Activated B cell treated with CpG ODN at 0.5 μM for 24 hours (primary cell): ENCODE measurements at regions of chr1 and their contacts with region 1.

Region 1: GRCh38 chr1:28409090-28409489 is 39.5 kb downstream of the PHACTR4 start:
- DNase-seq: no peak
- ATAC-seq: no peak
- H3K4me3 Mint-ChIP-seq: no peak overlapping the region
- H3K27ac Mint-ChIP-seq: no peak overlapping the region
- H3K4me1 Mint-ChIP-seq: peaks cover 7% of the 10 kb centered on the region
- H3K27me3 Mint-ChIP-seq: no peaks in the 10 kb centered on the region
- CTCF ChIP-seq: no peak

Region 2: DNA sequence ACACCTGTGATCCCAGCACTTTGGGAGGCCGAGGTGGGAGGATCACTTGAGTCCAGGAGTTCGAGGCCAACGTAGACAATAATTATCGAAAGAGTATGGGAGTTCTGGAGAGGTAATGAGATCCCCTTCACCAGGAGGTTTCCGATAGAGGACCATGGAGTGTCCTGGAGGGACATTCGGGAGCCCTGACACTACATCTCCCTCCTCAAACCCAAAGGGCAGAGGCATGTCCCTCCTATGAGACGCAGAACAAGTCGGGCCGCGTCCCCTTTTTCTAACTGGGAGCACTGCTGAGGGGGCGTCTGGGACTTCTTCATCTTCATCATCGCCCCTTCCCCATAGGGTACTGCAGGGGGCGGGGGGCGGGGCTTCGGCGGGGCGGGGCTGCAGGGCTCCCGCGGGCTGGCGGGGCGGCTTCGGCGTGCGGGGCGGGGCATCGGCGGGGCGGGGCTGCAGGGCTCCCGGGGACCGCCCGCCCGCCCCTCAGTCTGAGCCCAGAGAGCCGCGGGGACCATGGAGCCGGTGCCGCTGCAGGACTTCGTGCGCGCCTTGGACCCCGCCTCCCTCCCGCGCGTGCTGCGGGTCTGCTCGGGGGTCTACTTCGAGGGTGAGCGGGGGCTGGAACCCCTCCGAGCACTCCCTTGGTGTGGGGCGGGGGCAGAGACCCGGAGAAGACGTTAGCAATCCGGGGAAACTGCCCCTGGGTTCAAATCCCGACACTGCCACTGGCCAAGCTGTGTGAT is 536.9 kb before region 1 on chr1 and contains the start of gene THEMIS2:
- CTCF ChIA-PET with region 1: no interaction called
- POLR2A ChIA-PET with region 1: no interaction called
- intact Hi-C with region 1: no loop called
- DNase-seq: peak; percentile 73
- ATAC-seq: peak; percentile 71
- H3K4me3 Mint-ChIP-seq: peak within 1 kb of the TSS; percentile 97
- H3K27ac Mint-ChIP-seq: peak within 1 kb of the TSS; percentile 80
- H3K4me1 Mint-ChIP-seq: peaks cover 60% of the 10 kb centered on the region
- H3K27me3 Mint-ChIP-seq: no peaks in the 10 kb centered on the region
- CTCF ChIP-seq: no peak
- total RNA-seq, gene THEMIS2: 56.1 and 78.6 TPM in 2 replicates

Region 3: DNA sequence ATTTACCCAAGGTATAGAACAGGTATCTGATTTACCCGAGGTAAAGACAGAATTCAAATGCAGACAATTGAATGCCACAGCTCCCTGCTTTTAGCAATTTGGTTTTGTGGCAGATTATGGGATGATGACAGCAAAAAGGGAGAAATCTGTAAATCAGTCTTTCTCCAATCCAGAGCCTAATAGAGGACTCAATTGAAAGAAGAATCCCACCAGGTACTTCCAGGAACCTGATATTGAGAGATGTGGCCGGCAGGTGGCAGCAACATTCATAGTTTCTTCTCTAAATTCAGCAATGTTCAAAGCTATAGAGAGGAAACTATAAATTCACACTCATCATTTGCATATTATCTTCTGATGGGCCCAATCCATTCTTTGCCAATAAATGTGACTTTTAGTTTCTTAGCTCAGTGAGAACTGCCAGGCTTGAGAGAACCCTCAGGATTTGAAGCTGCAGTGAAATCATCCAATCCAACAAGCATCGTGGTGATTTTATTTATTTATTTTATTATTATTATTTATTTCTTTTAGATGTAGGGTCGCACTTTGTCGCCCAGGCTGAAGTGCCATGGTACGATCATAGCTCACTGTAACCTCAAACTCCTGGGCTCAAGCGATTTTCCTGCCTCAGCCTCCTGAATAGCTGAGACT is 49.4 kb before region 1 on chr1:
- CTCF ChIA-PET with region 1: interaction called, 4 read pairs
- POLR2A ChIA-PET with region 1: no interaction called
- intact Hi-C with region 1: loop called (anchors 2 kb)
- DNase-seq: peak; percentile 50
- ATAC-seq: peak; percentile 75
- H3K4me3 Mint-ChIP-seq: no peak overlapping the region
- H3K27ac Mint-ChIP-seq: no peak overlapping the region
- H3K4me1 Mint-ChIP-seq: peaks cover 2% of the 10 kb centered on the region
- H3K27me3 Mint-ChIP-seq: no peaks in the 10 kb centered on the region
- CTCF ChIP-seq: peak; percentile 91

Region 4: DNA sequence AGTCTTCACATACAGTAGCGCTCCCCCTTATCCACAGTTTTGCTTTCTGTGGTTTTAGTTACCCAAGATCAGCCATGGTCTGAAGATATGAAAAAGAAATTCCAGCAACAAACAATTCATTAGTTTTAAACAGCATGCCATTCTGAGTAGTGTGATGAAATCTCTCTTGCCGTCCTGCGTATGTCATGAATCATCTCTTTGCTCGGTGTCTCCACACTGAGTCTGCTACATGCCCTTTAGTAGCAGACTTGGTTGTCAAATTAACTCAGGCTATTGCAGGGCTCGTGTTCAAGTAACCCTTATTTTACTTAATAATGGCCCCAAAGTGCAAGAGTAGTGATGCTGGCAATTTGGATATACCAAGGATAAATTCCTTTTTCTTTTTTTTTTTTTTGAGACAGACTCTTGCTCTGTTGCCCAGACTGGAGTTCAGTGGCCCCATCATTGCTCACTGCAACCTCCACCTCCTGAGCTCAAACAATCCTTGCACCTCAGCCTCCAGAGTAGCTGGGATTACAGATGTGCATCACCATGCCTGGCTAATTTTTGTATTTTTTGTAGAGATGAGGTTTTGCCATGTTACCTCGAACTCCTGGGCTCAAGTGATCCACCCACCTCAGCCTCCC is 16.9 kb before region 1 on chr1:
- CTCF ChIA-PET with region 1: no interaction called
- POLR2A ChIA-PET with region 1: no interaction called
- intact Hi-C with region 1: no loop called
- DNase-seq: no peak
- ATAC-seq: no peak
- H3K4me3 Mint-ChIP-seq: no peak overlapping the region
- H3K27ac Mint-ChIP-seq: no peak overlapping the region
- H3K4me1 Mint-ChIP-seq: peaks cover 6% of the 10 kb centered on the region
- H3K27me3 Mint-ChIP-seq: no peaks in the 10 kb centered on the region
- CTCF ChIP-seq: no peak

Region 5: GRCh38 chr1:28480308-28480707 is 71.2 kb after region 1 on chr1:
- CTCF ChIA-PET with region 1: no interaction called
- POLR2A ChIA-PET with region 1: no interaction called
- intact Hi-C with region 1: no loop called
- DNase-seq: no peak
- ATAC-seq: no peak
- H3K4me3 Mint-ChIP-seq: no peak overlapping the region
- H3K27ac Mint-ChIP-seq: no peak overlapping the region
- H3K4me1 Mint-ChIP-seq: no peaks in the 10 kb centered on the region
- H3K27me3 Mint-ChIP-seq: no peaks in the 10 kb centered on the region
- CTCF ChIP-seq: no peak

Region 6: DNA sequence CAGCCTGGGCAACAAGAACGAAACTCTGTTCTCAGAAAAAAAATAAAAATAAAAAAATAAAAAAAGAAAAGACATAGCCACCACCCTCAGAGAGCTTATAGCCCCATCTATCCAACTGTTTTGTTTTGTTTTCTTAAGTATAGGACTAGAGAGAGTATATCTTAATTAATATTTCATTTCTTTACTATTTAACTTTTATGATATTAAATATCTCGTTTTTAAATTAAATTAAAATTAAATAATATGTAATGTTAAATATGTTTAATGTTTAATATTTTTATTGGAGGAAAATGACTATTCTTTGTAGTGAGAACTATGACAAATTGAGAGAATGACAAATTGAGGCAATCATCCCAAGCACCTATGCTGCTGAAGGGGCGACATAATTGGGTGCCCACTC is 294.5 kb after region 1 on chr1:
- CTCF ChIA-PET with region 1: no interaction called
- POLR2A ChIA-PET with region 1: no interaction called
- intact Hi-C with region 1: no loop called
- DNase-seq: no peak
- ATAC-seq: no peak
- H3K4me3 Mint-ChIP-seq: no peak overlapping the region
- H3K27ac Mint-ChIP-seq: no peak overlapping the region
- H3K4me1 Mint-ChIP-seq: no peaks in the 10 kb centered on the region
- H3K27me3 Mint-ChIP-seq: no peaks in the 10 kb centered on the region
- CTCF ChIP-seq: no peak